Esophagus muscularis mucosa (tissue), 4 donors: ENCODE measurements at regions of chr3 and their contacts with region 1.

Region 1: GRCh38 chr3:107574650-107575049 is 51.9 kb downstream of the BBX start:
- DNase-seq: no peak
- H3K4me3 ChIP-seq: no peak overlapping the region
- H3K27ac ChIP-seq: no peak overlapping the region
- H3K4me1 ChIP-seq: peaks cover 0 to 15% (median 7%) of the 10 kb centered on the region in 4 donors
- H3K27me3 ChIP-seq: no peaks in the 10 kb centered on the region
- CTCF ChIP-seq: peak; percentile 49 to 62 (median 55)
- EP300 ChIP-seq: no peak
- POLR2A ChIP-seq: no peak

Region 2: GRCh38 chr3:107657971-107658370 is 83.3 kb after region 1 on chr3:
- intact Hi-C with region 1: loop called (anchors 5 kb)
- DNase-seq: no peak
- H3K4me3 ChIP-seq: no peak overlapping the region
- H3K27ac ChIP-seq: no peak overlapping the region
- H3K4me1 ChIP-seq: peaks cover 21 to 45% (median 33%) of the 10 kb centered on the region in 4 donors
- H3K27me3 ChIP-seq: no peaks in the 10 kb centered on the region
- CTCF ChIP-seq: no peak
- EP300 ChIP-seq: no peak
- POLR2A ChIP-seq: no peak

Region 3: GRCh38 chr3:107740992-107741896 is 166.6 kb after region 1 on chr3:
- intact Hi-C with region 1: loop called (anchors 5 kb)
- DNase-seq: no peak
- H3K4me3 ChIP-seq: no peak overlapping the region
- H3K27ac ChIP-seq: no peak overlapping the region
- H3K4me1 ChIP-seq: no peaks in the 10 kb centered on the region
- H3K27me3 ChIP-seq: no peaks in the 10 kb centered on the region
- CTCF ChIP-seq: peak; percentile 56 to 58 (median 58)
- EP300 ChIP-seq: no peak
- POLR2A ChIP-seq: no peak